A549 (cell line): ENCODE measurements at regions of chr11 and their contacts with region 1.

Region 1: DNA sequence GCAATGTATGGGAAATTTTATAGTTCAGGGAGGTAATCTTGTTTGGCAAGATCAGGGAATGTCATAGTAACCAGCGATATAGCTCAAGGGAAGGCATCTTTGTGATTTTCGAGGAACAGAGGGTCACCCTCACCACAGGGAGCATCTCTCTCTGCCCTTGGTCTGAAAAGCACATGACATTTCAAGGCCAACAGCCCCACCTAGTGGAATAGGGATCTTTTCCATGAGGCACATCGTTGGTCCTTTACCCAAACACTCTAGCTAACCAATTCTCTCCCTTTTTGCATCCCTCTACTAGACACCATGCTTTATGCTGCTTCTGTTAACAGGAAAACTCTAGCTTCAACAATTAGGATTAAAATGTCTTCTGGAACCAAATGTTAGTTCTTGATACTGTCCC is 179.0 kb downstream of the GRM5 start:
- DNase-seq: peak; percentile 6 to 57
- ATAC-seq: peak; percentile 83 to 91; a peak in 5 of 6 replicates
- H3K4me3 ChIP-seq: no peak overlapping the region
- H3K27ac ChIP-seq: no peak overlapping the region
- H3K4me1 ChIP-seq: no peaks in the 10 kb centered on the region
- CTCF ChIP-seq: peak; percentile 47
- EP300 ChIP-seq: no peak
- POLR2A ChIP-seq: no peak
- RAD21 ChIP-seq: peak; percentile 66 to 76

Region 2: GRCh38 chr11:87878373-87878779 is 1008.4 kb before region 1 on chr11:
- CTCF ChIA-PET with region 1: interaction called, 12 read pairs
- POLR2A ChIA-PET with region 1: no interaction called
- DNase-seq: peak in 1 of 2 experiments; percentile 42
- ATAC-seq: peak in 1 of 2 experiments; percentile 51; a peak in 1 of 6 replicates
- H3K4me3 ChIP-seq: no peak overlapping the region
- H3K27ac ChIP-seq: no peak overlapping the region
- H3K4me1 ChIP-seq: no peaks in the 10 kb centered on the region
- CTCF ChIP-seq: peak; percentile 49
- EP300 ChIP-seq: no peak
- POLR2A ChIP-seq: no peak
- RAD21 ChIP-seq: peak; percentile 43 to 46; a peak in 3 of 5 replicates

Region 3: DNA sequence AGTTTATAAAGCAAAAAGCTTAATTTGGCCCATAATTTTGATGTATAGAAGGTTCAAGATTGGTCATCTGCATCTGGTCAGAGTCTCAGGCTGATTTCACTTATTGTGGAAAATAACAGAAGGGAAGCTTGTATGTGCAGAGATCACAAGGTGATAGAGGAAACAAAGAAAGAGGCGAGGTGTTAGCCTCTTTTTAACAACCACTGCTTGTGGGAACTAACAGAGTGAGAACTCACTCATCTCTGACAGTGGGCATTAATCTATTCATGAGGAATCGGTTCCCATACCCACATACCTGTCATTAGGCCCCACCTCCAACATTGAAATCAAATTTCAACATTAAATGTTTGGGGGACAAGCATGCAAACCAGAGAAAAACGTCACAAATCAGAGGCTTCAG is 71.3 kb before region 1 on chr11:
- CTCF ChIA-PET with region 1: no interaction called
- POLR2A ChIA-PET with region 1: no interaction called
- DNase-seq: no peak
- ATAC-seq: no peak
- H3K4me3 ChIP-seq: no peak overlapping the region
- H3K27ac ChIP-seq: no peak overlapping the region
- H3K4me1 ChIP-seq: no peaks in the 10 kb centered on the region
- CTCF ChIP-seq: no peak
- EP300 ChIP-seq: no peak
- POLR2A ChIP-seq: no peak
- RAD21 ChIP-seq: no peak

Region 4: DNA sequence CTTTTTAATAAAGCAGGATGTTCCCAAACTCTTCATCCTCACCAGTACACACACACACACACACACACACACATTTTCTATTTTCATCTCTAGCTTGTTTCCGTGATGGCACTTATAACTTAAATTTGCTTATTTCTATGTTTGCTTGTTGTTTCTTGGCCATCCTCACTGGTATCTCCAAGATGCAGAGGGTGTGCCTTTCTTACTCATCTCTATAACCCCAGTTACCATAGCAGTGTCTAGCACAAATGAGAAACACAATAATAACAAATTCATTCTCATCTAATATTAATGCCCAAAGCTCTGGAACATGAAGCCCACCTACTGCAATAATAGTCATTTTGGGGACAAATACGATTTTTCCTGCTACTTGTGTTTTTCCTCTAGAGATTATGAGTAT is 22.7 kb after region 1 on chr11:
- CTCF ChIA-PET with region 1: no interaction called
- POLR2A ChIA-PET with region 1: no interaction called
- DNase-seq: no peak
- ATAC-seq: no peak
- H3K4me3 ChIP-seq: no peak overlapping the region
- H3K27ac ChIP-seq: no peak overlapping the region
- H3K4me1 ChIP-seq: no peaks in the 10 kb centered on the region
- CTCF ChIP-seq: no peak
- EP300 ChIP-seq: no peak
- POLR2A ChIP-seq: no peak
- RAD21 ChIP-seq: no peak

Region 5: DNA sequence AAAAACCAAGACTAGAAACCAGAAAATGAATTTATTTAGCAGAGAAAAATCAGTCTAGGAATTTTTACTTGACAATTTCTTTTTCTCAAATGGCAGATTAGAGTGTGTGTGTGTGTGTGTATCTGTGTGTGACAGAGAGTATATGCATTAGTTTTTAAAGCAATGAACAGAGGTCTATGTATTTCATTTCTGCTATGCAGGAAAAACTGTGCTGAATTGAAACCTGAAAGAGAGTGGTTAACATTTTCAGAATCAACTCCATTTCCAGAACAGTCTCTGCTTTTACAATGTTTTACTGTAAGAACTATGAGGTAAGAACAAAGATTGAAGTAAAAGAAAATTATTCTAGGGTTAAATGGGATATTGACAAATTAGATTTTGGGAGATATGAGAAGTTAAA is 64.2 kb after region 1 on chr11:
- CTCF ChIA-PET with region 1: no interaction called
- POLR2A ChIA-PET with region 1: no interaction called
- DNase-seq: no peak
- ATAC-seq: no peak
- H3K4me3 ChIP-seq: no peak overlapping the region
- H3K27ac ChIP-seq: no peak overlapping the region
- H3K4me1 ChIP-seq: no peaks in the 10 kb centered on the region
- CTCF ChIP-seq: no peak
- EP300 ChIP-seq: no peak
- POLR2A ChIP-seq: no peak
- RAD21 ChIP-seq: no peak